Thyroid gland (tissue), 4 donors: ENCODE measurements at regions of chr14 and their contacts with region 1.

Region 1: DNA sequence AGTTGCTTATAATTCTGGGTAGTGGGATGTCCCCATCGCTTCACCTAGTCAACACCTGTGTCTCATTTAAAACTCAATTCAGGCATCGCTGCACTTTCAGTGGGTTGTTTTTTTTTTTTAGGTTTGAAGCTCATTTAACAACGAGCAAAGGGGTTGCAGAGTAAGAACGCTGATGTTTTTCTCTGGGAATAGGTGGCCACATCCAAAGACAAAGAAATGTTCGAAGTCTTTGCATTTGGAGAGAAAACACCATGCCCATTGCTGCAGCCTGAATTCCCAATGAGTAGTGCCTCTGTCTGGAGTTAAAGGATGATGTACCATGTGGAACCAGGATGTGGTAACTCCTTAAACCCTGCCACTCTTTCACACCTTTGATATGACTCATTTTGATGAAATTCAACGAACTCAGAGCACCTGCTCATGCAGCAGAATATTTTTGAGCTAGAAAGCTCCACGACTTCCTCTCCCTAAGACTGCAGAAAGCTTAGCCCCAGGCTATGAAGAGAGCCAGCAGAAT is 35.1 kb upstream of the BATF start:
- DNase-seq: no peak
- H3K4me3 ChIP-seq: no peak overlapping the region
- H3K27ac ChIP-seq: no peak overlapping the region
- H3K4me1 ChIP-seq: no peaks in the 10 kb centered on the region
- H3K27me3 ChIP-seq: no peaks in the 10 kb centered on the region
- CTCF ChIP-seq: no peak
- POLR2A ChIP-seq: no peak

Region 2: DNA sequence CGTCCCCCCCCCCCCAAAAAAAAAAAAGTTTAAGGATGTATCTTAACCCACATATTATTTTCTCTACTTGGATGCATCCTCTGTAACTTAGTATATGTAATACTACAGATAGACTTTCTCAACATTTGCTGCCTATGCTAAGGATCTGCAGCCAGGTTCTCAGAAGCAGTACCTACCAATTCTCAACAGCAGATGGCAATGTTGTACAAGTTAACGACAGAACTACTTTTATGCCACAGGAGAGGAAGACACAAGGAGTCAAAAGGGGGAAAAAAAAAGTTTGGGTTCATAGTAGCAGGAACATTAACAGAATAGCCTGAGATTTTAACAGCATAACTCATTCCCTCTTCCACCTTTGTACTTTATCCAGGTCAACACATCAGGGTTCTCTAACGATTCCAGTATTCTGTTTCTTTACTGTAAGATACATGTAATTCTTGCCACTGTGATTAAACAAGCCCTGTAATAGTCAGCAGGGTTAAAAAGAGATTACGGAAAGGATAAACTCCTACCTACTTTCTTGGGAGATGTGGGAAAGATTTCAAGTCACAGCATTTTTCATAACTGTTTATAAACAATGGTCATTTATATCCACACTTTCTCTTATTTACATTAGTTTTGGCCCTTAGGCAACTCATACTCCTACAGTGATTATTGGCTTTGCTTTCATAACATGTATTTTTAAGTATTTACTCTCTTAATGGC is 354.7 kb before region 1 on chr14:
- intact Hi-C with region 1: loop called (anchors 10 kb)
- DNase-seq: peak; percentile 16 to 30
- H3K4me3 ChIP-seq: no peak overlapping the region
- H3K27ac ChIP-seq: peak overlapping the region in 1 of 3 donors; percentile 14
- H3K4me1 ChIP-seq: peaks cover 13 to 14% of the 10 kb centered on the region in 2 donors
- H3K27me3 ChIP-seq: no peaks in the 10 kb centered on the region
- CTCF ChIP-seq: peak; percentile 44 to 89 (median 77)
- POLR2A ChIP-seq: no peak

Region 3: GRCh38 chr14:75307700-75308379 is 179.4 kb before region 1 on chr14:
- intact Hi-C with region 1: loop called (anchors 2 kb)
- DNase-seq: peak; percentile 83 to 88
- H3K4me3 ChIP-seq: no peak overlapping the region
- H3K27ac ChIP-seq: no peak overlapping the region
- H3K4me1 ChIP-seq: peaks cover 16 to 17% of the 10 kb centered on the region in 2 donors
- H3K27me3 ChIP-seq: no peaks in the 10 kb centered on the region
- CTCF ChIP-seq: peak; percentile 71 to 91 (median 86)
- POLR2A ChIP-seq: no peak

Region 4: GRCh38 chr14:75399821-75400678 is 87.2 kb before region 1 on chr14:
- intact Hi-C with region 1: loop called (anchors 10 kb)
- DNase-seq: peak; percentile 98 to 99
- H3K4me3 ChIP-seq: no peak overlapping the region
- H3K27ac ChIP-seq: peak overlapping the region; percentile 40 to 66 (median 60)
- H3K4me1 ChIP-seq: peaks cover 20 to 26% of the 10 kb centered on the region in 2 donors
- H3K27me3 ChIP-seq: no peaks in the 10 kb centered on the region
- CTCF ChIP-seq: no peak
- POLR2A ChIP-seq: no peak

Region 5: DNA sequence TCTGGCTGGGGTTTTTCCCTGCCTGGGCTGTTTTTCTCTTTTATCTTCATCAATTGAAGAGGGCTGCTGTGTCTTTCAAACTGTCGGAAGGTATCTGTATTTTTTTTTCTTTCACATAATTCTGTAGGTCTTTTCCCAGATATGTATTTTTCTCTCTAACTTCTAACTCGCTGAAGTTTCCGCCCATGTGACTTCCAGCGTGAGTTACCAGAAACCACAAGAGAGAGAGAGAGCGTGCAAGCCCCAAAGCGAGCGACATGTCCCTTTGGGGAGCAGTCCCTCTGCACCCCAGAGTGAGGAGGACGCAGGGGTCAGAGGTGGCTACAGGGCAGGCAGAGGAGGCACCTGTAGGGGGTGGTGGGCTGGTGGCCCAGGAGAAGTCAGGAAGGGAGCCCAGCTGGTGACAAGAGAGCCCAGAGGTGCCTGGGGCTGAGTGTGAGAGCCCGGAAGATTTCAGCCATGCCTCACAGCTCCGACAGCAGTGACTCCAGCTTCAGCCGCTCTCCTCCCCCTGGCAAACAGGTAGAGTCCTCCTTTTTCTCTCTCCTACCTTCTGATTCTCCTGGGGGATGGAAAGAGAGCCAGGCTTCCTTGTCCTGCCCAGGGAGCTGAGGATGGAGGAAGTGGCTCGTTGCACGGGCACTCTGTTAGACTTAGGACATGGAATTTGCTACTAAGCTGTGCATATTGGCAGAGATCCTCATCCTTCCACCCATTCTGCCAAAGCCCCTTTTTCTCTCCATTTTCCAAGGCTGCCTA is 35.2 kb after region 1 on chr14 and contains the start of gene BATF:
- intact Hi-C with region 1: no loop called
- DNase-seq: peak in 1 of 2 donors; percentile 12
- H3K4me3 ChIP-seq: no peak within 1 kb of the TSS
- H3K27ac ChIP-seq: peak within 1 kb of the TSS in 1 of 3 donors; percentile 46
- H3K4me1 ChIP-seq: peaks cover 0 to 16% of the 10 kb centered on the region in 2 donors
- H3K27me3 ChIP-seq: no peaks in the 10 kb centered on the region
- CTCF ChIP-seq: no peak
- POLR2A ChIP-seq: no peak
- total RNA-seq, gene BATF: 1.6 to 6.6 (median 4.9) TPM in 3 of 4 donors, not detected in the other